Activated T-helper 2 cell treated with anti-CD3 and anti-CD28 coated beads, Interferon-gamma antibody, Interleukin-2, Interleukin-4, amounts not matched to agents 10 μg/mL and 5 μg/mL and 100 μg/mL, durations not matched to agents 14 hours and 24 hours and 36 hours (primary cell): ENCODE measurements at regions of chr4 and their contacts with region 1.

Region 1: GRCh38 chr4:90906239-90906638 is 779.0 kb downstream of the CCSER1 start:
- DNase-seq: no peak
- H3K4me3 Mint-ChIP-seq: no peak overlapping the region
- H3K27ac Mint-ChIP-seq: no peak overlapping the region
- H3K4me1 Mint-ChIP-seq: no peaks in the 10 kb centered on the region
- H3K27me3 Mint-ChIP-seq: no peaks in the 10 kb centered on the region

Region 2: DNA sequence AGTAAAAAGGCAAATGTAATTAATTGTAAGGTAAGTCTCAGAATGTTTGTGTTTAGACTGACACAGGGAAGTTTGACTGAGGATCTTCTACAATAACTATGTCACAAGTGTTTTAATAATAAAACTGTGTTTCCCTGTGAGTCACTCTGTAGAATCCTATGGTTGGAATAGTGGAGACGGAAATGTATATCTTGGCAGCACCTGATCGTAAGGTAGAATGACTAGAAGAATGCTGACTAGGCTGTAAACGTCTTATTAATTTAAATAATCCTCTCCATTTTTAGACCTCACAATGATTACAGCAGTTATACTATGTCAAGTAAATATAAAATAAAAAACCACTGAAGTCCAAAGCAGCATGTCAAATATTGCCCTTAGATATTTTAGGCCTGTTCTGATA is 513.0 kb before region 1 on chr4:
- intact Hi-C with region 1: loop called (anchors 5 kb)
- DNase-seq: no peak
- H3K4me3 Mint-ChIP-seq: no peak overlapping the region
- H3K27ac Mint-ChIP-seq: no peak overlapping the region
- H3K4me1 Mint-ChIP-seq: no peaks in the 10 kb centered on the region
- H3K27me3 Mint-ChIP-seq: no peaks in the 10 kb centered on the region